ENCODE measurements at regions of chr16 and their contacts with region 1.

Region 1: GRCh38 chr16:31700526-31701388 is 172.8 kb upstream of the ZNF267 start:
- DNase-seq: peak; percentile 76
- H3K4me3 ChIP-seq: peak overlapping the region; percentile 67
- H3K27ac ChIP-seq: no peak overlapping the region
- H3K4me1 ChIP-seq: no peaks in the 10 kb centered on the region
- H3K27me3 ChIP-seq: no peaks in the 10 kb centered on the region
- CTCF ChIP-seq: no peak; the same call in 1 of the 2 replicates

Region 2: DNA sequence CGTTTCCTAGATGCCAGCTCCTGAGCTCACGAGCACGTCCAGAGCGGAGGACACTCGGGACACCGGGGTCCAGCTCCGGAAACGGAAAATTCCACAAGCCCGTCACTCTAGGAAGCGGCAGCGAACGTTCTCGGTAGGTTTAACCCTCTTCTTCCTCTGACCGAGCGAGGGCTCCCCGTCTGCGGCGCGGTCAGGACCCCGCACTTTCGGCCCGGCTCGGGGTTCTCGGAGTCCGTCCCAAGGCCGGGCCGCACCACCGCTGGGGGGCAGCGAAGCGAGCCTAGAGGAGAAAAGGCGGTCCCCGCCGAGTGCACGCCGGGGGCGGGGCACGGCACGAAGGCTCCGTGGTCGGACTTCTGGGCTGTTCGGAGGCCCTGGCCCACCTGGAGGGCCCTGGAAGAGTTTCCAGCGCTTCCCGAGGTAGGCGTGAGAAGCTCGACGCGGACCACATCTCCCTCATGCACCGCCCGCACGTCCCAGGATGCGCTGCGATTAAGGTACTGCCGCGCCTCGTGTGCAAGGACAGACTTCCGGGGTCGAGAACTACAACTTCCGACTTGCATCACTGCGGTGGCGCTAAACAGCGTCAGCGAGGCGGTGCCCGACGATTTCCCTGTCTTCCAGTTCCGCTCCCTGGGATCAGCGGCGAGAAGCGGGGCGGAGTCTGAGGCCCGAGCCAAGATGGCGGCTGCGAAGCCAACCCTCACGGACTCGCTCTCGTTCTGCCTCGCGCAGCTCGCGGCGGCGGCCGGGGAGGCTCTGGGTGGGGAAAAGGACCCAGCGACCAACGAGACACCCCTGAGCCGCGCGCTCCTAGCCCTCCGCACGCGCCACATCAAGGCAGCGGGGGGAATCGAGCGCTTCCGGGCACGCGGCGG is 241.7 kb before region 1 on chr16 and contains the start of gene ARMC5:
- CTCF ChIA-PET with region 1: no interaction called
- POLR2A ChIA-PET with region 1: no interaction called
- intact Hi-C with region 1: loop called (anchors 10 kb)
- DNase-seq: peak; percentile 98
- H3K4me3 ChIP-seq: peak within 1 kb of the TSS; percentile 62
- H3K27ac ChIP-seq: peak within 1 kb of the TSS; percentile 98
- H3K4me1 ChIP-seq: peaks cover 35% of the 10 kb centered on the region
- H3K27me3 ChIP-seq: no peaks in the 10 kb centered on the region
- CTCF ChIP-seq: peak; percentile 75
- total RNA-seq, gene ARMC5: 7.4 and 8.8 TPM in 2 replicates

Region 3: DNA sequence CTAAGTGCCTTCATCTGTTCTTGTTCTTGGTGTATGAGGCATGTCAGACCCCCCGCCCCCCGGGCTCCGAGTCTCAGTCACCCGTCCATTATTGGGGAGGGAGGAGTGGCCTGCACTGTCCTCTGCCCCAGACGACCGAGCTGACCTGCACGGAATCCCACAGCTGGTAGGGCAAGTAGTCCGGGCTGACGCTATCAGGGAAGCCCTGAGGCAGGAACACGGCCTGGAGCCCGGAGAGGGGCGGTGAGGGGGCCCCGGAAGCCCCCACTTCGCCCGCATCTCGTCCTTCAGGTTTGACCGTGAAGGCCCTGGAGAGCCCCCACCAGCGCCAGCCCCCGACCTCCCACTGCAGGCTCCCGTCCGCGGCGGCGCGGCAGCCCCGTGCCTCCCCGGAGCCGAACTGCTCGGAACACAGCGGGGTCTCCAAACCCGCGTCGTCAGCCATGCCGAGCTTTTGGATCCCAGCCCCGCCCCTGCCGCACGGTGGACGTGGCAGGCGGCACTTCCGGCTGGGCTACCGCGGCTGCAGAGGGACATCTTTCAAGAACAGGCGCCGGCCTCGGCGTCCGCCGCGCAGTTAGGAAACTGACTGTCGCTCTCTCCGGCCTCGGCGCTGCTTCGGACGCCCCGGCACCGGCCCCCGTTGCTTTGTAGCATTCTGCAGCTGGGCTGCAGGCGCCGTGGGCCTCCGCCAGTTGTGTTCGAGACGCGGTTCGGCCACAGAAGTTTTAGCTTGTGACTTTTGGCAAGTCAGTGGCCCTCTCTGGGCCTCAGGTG is 192.6 kb before region 1 on chr16 and contains the start of gene RUSF1:
- CTCF ChIA-PET with region 1: no interaction called
- POLR2A ChIA-PET with region 1: no interaction called
- intact Hi-C with region 1: loop called (anchors 5 kb)
- DNase-seq: peak; percentile 95
- H3K4me3 ChIP-seq: peak within 1 kb of the TSS; percentile 95
- H3K27ac ChIP-seq: peak within 1 kb of the TSS; percentile 97
- H3K4me1 ChIP-seq: peaks cover 11% of the 10 kb centered on the region
- H3K27me3 ChIP-seq: no peaks in the 10 kb centered on the region
- CTCF ChIP-seq: no peak
- total RNA-seq, gene RUSF1: 41.9 and 46.3 TPM in 2 replicates

Measured in A673 (cell line).